ENCODE measurements at regions of chr21 and their contacts with region 1.

Region 1: DNA sequence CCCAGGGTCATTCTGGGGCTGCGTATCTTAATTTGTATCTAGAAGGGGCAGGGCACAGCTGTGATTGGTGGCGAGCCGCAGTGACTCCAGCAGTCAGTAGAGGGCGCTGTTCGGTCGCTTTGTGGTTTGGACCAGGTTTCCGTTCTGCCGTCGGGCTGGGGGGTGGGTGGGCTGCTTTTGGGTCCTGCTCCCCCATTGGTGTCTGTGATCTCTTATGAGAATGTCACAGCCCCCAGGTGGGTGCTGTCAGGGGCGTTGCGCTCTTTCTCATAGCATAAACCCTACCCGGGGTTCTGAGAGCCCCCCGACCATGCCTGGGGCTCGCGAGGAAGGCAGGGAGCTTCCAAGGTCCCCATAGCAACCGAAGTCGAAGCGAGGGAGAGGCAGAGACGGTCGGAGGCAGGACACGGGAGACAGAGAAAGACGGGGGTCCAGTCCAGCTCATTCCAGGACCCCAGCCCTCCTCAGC is 5.4 kb downstream of the TFF3 start:
- DNase-seq: peak; percentile 54 to 71
- H3K4me3 ChIP-seq: no peak overlapping the region
- H3K4me3 Mint-ChIP-seq: no peak overlapping the region
- H3K27ac Mint-ChIP-seq: no peak overlapping the region
- H3K4me1 ChIP-seq: peaks cover 8% of the 10 kb centered on the region
- H3K4me1 Mint-ChIP-seq: no peaks in the 10 kb centered on the region
- H3K27me3 ChIP-seq: no peaks in the 10 kb centered on the region
- H3K27me3 Mint-ChIP-seq: peaks cover 3% of the 10 kb centered on the region
- CTCF ChIP-seq: peak; percentile 69 to 81

Region 2: DNA sequence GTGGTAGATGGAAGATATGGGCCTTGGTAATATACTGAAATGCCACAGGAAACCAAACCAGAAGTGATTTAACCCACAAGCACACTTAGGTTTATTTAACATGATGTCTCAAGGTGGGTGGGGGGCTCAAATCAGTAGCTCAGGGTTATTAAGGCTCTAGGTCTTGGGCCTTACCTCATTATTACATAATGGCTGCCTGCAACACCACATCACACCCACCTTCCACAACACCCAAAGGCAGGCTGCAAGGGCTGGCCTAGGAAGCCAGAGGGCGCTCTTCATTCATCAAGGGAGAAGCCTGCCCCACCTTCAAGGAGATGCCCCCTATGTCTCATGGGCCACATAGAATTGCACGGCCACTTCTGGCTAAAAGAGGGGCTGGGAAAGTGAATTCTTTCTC is 50.5 kb after region 1 on chr21:
- CTCF ChIA-PET with region 1: no interaction called
- POLR2A ChIA-PET with region 1: no interaction called
- intact Hi-C with region 1: loop called (anchors 10 kb)
- DNase-seq: no peak
- H3K4me3 ChIP-seq: no peak overlapping the region
- H3K4me3 Mint-ChIP-seq: no peak overlapping the region
- H3K27ac Mint-ChIP-seq: no peak overlapping the region
- H3K4me1 ChIP-seq: no peaks in the 10 kb centered on the region
- H3K4me1 Mint-ChIP-seq: peaks cover 7% of the 10 kb centered on the region
- H3K27me3 ChIP-seq: no peaks in the 10 kb centered on the region
- H3K27me3 Mint-ChIP-seq: no peaks in the 10 kb centered on the region
- CTCF ChIP-seq: peak in 1 of 2 experiments; percentile 10

Region 3: DNA sequence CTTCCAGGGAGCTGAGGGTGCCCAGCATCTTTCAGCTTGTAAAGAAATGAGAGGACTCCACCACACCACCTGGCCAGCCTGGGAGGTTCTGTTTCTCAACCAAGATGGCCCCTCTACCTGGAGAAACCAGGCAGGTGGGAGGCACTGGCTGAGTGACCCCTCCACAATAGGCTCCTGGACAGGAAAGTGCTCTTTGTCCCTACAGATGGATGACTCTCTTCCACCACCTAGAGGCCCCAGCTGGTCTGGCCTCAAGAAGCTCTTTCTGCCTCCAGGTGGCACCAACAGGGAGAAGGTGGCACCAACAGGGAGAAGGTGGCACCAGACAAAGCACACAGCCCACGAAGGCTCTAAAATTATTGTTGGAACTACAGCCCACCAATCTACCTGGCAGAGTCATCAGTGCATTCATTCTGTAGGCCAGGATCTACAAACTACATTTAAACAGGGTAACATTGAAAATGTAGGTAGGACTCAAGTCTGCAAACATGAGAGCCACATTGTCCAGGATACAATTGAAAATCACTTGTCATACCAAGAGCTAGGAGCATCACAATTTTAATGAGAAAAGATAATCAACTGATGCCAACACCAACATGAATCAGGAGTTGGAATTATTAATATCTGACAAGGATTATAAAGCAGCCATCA is 71.7 kb after region 1 on chr21:
- CTCF ChIA-PET with region 1: interaction called, 15 read pairs
- POLR2A ChIA-PET with region 1: no interaction called
- intact Hi-C with region 1: loop called (anchors 1 kb)
- DNase-seq: peak; percentile 63 to 64
- H3K4me3 ChIP-seq: no peak overlapping the region
- H3K4me3 Mint-ChIP-seq: no peak overlapping the region
- H3K27ac Mint-ChIP-seq: no peak overlapping the region
- H3K4me1 ChIP-seq: peaks cover 8% of the 10 kb centered on the region
- H3K4me1 Mint-ChIP-seq: peaks cover 16% of the 10 kb centered on the region
- H3K27me3 ChIP-seq: no peaks in the 10 kb centered on the region
- H3K27me3 Mint-ChIP-seq: no peaks in the 10 kb centered on the region
- CTCF ChIP-seq: peak; percentile 77 to 94

Region 4: DNA sequence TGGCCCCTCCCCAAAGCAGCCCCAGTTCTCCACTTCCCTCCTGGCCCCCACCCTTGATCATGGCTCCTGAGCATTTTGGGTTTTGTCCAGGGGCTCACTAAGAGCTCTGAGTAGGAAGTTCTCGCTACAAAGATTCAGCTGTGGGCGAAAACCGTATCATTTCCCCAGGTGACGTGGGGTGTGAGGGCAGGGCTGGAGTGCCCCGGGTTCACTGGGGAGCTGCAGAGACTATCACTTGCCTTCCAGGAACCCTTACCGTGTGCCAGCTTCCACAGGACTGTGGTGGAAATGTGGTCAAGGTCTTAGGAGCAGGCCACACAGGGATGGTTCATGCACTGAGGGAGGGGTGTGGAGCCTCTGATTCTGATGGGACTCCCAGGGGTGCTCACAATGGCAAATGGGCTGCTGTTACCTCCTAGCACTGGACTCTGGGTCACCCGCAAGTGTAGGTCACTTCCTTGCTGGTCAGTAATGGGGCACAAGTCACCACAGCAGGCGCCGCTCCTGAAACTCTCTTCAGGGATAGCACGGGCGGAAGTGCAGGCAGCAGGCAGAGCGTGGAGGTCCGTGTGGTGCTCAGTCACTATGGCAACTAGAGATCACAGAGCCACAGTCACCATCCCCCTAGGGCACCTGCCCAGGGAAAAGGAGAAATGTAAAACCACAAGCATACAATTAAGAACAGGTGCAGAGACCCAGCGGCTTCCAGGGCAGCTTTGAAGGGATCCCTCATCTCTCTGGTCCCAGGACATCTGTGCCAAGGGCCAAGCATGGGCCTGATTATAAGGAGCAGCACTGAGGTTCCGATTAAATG is 150.8 kb after region 1 on chr21:
- CTCF ChIA-PET with region 1: interaction called, 11 read pairs
- POLR2A ChIA-PET with region 1: no interaction called
- intact Hi-C with region 1: no loop called
- DNase-seq: peak in 1 of 2 experiments; percentile 17
- H3K4me3 ChIP-seq: no peak overlapping the region
- H3K4me3 Mint-ChIP-seq: no peak overlapping the region
- H3K27ac Mint-ChIP-seq: no peak overlapping the region
- H3K4me1 ChIP-seq: peaks cover 30% of the 10 kb centered on the region
- H3K4me1 Mint-ChIP-seq: peaks cover 31% of the 10 kb centered on the region
- H3K27me3 ChIP-seq: no peaks in the 10 kb centered on the region
- H3K27me3 Mint-ChIP-seq: no peaks in the 10 kb centered on the region
- CTCF ChIP-seq: no peak

Region 5: GRCh38 chr21:42513985-42514882 is 204.4 kb after region 1 on chr21:
- CTCF ChIA-PET with region 1: no interaction called
- POLR2A ChIA-PET with region 1: no interaction called
- intact Hi-C with region 1: no loop called
- DNase-seq: peak in 1 of 2 experiments; percentile 48
- H3K4me3 ChIP-seq: peak overlapping the region; percentile 76
- H3K4me3 Mint-ChIP-seq: peak overlapping the region; percentile 79
- H3K27ac Mint-ChIP-seq: peak overlapping the region; percentile 29
- H3K4me1 ChIP-seq: peaks cover 31% of the 10 kb centered on the region
- H3K4me1 Mint-ChIP-seq: peaks cover 25% of the 10 kb centered on the region
- H3K27me3 ChIP-seq: no peaks in the 10 kb centered on the region
- H3K27me3 Mint-ChIP-seq: no peaks in the 10 kb centered on the region
- CTCF ChIP-seq: no peak

Region 6: DNA sequence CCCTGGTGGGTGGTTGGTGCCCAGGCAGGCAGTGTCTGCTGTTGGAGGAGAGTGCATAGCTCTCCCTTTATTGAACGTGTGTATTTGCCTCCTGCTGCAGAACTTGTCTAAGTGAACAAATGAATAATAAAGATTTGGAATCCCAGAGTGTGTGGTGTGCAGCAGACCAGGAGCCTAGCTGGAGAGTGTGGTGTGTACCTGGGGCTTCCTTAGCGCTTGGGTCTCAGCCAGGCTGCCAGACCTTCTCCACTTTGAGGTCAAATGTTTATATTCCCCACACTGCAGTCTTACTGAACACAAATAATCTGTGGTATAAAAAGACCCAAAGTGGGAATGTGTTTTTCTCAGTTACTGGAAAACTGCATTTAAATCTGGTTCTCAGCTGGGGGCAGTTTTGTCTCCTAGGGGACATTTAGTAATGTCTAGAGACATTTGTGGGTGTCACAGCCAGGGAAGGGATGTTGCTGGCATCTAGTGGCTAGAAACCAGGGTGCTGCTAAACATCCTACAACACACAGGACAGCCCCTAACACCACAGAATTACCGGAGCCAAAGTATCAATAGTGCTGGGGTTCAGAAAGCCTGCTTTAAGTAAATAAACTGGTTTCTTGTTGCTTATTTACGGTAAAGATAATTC is 227.4 kb after region 1 on chr21:
- CTCF ChIA-PET with region 1: no interaction called
- POLR2A ChIA-PET with region 1: no interaction called
- intact Hi-C with region 1: loop called (anchors 10 kb)
- DNase-seq: peak; percentile 19 to 34
- H3K4me3 ChIP-seq: no peak overlapping the region
- H3K4me3 Mint-ChIP-seq: no peak overlapping the region
- H3K27ac Mint-ChIP-seq: no peak overlapping the region
- H3K4me1 ChIP-seq: no peaks in the 10 kb centered on the region
- H3K4me1 Mint-ChIP-seq: no peaks in the 10 kb centered on the region
- H3K27me3 ChIP-seq: no peaks in the 10 kb centered on the region
- H3K27me3 Mint-ChIP-seq: no peaks in the 10 kb centered on the region
- CTCF ChIP-seq: peak in 1 of 2 experiments; percentile 56

Measured in Caco-2 (cell line).